PC-9 (cell line): ENCODE measurements at regions of chr11 and their contacts with region 1.

Region 1: DNA sequence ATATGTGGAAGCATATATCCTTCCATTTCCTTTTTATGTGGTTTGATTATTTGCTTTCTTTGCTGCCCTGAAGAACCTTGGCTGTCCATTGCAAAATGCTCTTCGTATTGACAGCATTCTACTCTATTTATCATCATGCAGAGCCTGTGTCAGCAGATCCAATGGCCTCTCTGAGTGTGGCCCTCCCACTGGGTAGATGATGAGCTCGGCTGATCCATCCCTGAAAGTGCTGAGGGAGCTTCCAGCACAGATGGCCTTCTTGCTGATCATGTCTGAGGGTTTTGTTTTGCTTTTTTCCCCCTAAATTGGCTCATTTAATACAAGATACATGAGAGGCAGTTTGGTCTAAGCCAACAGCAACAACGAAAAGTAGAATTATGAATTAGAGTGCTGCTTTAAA is 181.0 kb downstream of the GRIA4 start:
- DNase-seq: no peak
- H3K4me3 ChIP-seq: no peak overlapping the region
- H3K27ac ChIP-seq: no peak overlapping the region
- H3K4me1 ChIP-seq: no peaks in the 10 kb centered on the region
- H3K27me3 ChIP-seq: no peaks in the 10 kb centered on the region
- CTCF ChIP-seq: no peak

Region 2: DNA sequence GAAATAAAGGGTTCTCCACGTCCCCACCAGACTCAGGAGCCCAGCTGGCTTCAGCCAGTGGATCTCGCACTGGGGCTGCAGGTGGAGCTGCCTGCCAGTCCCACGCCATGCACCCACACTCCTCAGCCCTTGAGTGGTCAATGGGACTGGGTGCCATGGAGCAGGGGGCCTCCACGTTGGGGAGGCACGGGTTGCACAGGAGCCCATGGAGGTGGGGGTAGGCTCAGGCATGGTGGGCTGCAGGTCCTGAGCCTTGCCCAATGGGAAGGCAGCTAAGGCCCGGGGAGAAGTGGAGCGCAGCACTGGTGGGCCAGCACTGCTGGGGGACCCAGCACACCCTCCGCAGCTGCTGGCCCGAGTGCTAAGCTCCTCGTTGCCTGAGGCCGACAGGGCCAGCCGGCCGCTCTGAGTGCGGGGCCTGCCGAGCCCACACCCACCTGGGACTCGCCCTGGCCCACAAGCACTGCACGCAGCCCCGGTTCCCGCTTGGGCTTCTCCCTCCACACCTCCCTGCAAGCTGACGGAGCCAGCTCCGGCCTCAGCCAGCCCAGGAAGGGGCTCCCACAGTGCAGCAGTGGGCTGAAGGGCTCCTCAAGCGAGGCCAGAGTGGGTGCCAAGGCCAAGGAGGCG is 1368.4 kb before region 1 on chr11:
- CTCF ChIA-PET with region 1: interaction called, 14 read pairs
- POLR2A ChIA-PET with region 1: no interaction called
- intact Hi-C with region 1: no loop called
- DNase-seq: no peak
- H3K4me3 ChIP-seq: no peak overlapping the region
- H3K27ac ChIP-seq: no peak overlapping the region
- H3K4me1 ChIP-seq: no peaks in the 10 kb centered on the region
- H3K27me3 ChIP-seq: no peaks in the 10 kb centered on the region
- CTCF ChIP-seq: no peak